Heart left ventricle (tissue), 16 donors: ENCODE measurements at regions of chr5 and their contacts with region 1.

Region 1: DNA sequence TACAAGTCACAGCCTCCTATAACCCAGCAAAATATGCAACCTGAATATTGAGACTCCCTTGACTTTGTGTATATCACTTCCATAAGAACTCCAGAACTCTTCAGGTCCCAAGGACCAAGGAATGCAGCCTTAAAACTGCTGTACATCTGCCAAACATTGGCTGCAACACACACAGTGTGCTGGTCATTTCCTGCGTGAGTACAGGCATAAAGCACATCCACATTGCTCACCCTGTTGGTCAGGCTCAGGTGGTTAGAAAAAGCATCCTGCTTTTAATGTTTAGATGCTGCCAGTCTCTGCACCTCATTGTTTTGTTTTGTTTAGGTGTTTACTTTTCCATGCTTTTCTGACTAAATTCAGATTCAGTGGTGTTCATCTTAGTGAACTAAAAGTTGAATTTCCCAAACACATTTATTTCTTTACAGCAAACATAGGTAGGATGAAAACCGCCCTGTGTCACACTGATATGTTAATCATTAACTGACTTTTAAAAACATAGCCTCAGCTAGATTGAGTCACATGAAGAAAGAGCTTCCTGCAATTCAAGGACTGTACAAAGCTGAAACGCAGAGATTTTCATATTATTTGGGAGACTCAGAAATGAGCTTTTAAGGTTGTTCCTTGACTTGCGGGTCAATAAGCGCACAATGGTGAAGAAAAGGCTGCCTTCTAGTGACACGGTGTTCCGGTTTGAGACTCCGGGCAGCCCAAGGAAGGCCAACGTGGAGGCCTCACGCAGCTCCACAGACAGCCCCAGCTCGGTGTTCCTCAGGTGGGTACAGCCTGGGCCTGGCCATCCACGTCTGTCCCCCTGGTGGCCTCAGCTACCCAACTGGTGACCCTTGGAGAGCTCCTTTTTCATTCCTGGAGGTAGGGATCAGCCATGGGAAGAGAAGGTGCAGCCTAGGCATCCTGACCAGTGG is 52.2 kb upstream of the GRAMD2B start:
- DNase-seq: no peak
- ATAC-seq: peak in 3 of 4 donors; percentile 7 to 21 (median 18)
- H3K4me3 ChIP-seq: no peak overlapping the region
- H3K27ac ChIP-seq: peak overlapping the region in 1 of 12 donors; percentile 11
- H3K4me1 ChIP-seq: peaks cover 0 to 6% (median 0%) of the 10 kb centered on the region in 12 donors
- H3K27me3 ChIP-seq: no peaks in the 10 kb centered on the region
- CTCF ChIP-seq: no peak
- POLR2A ChIP-seq: no peak

Region 2: DNA sequence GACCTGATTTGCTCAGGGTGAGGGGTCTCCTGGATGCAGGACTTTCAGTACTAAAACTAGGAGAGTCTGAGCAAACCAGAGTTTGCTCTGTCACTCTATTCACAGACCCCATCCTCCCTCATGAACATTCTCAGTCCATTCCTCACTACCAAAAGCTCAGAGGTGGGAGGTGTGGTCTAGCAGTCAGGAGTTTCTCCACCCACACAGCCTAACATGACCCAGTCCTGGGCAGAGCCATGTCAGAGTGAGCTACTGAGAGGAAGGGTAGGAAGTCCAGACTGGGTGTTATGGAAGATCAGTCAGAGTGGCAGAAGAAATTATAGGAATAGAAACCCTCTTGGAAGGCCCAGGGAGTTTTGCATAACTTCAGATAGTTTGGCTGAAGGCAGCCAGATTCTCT is 61.2 kb before region 1 on chr5:
- intact Hi-C with region 1: no loop called
- DNase-seq: no peak
- ATAC-seq: no peak
- H3K4me3 ChIP-seq: no peak overlapping the region
- H3K27ac ChIP-seq: no peak overlapping the region
- H3K4me1 ChIP-seq: no peaks in the 10 kb centered on the region
- H3K27me3 ChIP-seq: no peaks in the 10 kb centered on the region
- CTCF ChIP-seq: no peak
- POLR2A ChIP-seq: no peak

Region 3: GRCh38 chr5:126414874-126415502 is 43.9 kb after region 1 on chr5:
- intact Hi-C with region 1: loop called in 4 of 10 experiments (anchors 5 to 10 kb)
- DNase-seq: peak in 4 of 5 donors; percentile 40 to 80 (median 58)
- ATAC-seq: peak; percentile 97 to 99 (median 98)
- H3K4me3 ChIP-seq: peak overlapping the region in 4 of 12 donors; percentile 4 to 13 (median 6)
- H3K27ac ChIP-seq: peak overlapping the region; percentile 35 to 82 (median 71)
- H3K4me1 ChIP-seq: peaks cover 9 to 34% (median 25%) of the 10 kb centered on the region in 12 donors
- H3K27me3 ChIP-seq: no peaks in the 10 kb centered on the region
- CTCF ChIP-seq: no peak
- POLR2A ChIP-seq: no peak

Region 4: DNA sequence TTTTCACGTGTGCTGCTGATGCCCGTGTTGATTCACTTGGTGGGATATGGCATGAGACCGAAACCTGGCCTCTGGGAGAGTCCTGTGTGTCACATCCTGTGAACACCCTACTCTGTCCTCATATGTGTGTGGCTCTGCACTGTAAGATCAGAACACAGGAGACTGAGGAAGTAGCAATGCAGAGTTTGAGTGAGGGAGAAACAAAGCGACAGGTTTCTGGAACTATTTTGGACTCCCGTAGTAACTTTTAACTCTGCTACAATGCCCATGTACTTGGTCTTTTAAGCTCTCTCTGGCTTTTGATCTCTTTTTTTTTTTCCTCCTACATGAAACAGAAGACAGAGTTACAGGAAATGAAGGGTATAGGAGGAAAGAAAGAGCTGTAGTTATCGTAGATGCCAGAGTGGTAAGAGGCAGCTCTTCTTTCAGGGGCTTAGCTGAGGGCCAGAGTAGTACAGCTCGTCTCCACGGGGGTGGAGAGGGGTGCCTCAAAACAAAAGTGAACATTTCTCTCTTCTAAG is 78.8 kb after region 1 on chr5:
- intact Hi-C with region 1: loop called in 1 of 10 experiments (anchors 2 kb)
- DNase-seq: peak in 1 of 5 donors; percentile 16
- ATAC-seq: peak; percentile 75 to 92 (median 83)
- H3K4me3 ChIP-seq: peak overlapping the region in 5 of 12 donors; percentile 1 to 15 (median 8)
- H3K27ac ChIP-seq: peak overlapping the region in 10 of 12 donors; percentile 9 to 76 (median 42)
- H3K4me1 ChIP-seq: peaks cover 0 to 37% (median 21%) of the 10 kb centered on the region in 12 donors
- H3K27me3 ChIP-seq: no peaks in the 10 kb centered on the region
- CTCF ChIP-seq: no peak
- POLR2A ChIP-seq: peak in 1 of 2 donors; percentile 30

Region 5: DNA sequence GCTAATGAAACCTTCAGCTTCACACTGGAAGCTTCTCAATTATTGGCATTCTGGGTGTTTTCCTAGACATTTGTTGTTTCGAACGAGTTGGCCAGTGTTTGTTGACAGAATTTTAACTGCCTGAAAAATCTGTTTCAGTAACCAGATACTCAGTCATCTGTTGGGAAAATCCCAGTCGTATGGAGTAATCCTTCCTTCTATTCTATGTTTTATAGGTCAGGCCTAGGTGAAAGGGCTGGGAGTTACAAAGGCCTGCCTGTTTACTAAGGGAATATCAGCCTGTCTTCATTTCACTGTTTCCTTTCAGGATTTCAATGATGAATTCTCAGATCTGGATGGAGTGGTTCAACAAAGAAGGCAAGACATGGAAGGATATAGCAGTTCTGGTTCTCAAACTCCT is 112.1 kb after region 1 on chr5:
- intact Hi-C with region 1: loop called in 1 of 10 experiments (anchors 5 kb)
- DNase-seq: no peak
- ATAC-seq: no peak
- H3K4me3 ChIP-seq: no peak overlapping the region
- H3K27ac ChIP-seq: peak overlapping the region in 1 of 12 donors; percentile 38
- H3K4me1 ChIP-seq: peaks cover 0 to 30% (median 7%) of the 10 kb centered on the region in 12 donors
- H3K27me3 ChIP-seq: no peaks in the 10 kb centered on the region
- CTCF ChIP-seq: no peak
- POLR2A ChIP-seq: no peak